GM12878 (cell line): ENCODE measurements at regions of chr1 and their contacts with region 1.

Region 1: DNA sequence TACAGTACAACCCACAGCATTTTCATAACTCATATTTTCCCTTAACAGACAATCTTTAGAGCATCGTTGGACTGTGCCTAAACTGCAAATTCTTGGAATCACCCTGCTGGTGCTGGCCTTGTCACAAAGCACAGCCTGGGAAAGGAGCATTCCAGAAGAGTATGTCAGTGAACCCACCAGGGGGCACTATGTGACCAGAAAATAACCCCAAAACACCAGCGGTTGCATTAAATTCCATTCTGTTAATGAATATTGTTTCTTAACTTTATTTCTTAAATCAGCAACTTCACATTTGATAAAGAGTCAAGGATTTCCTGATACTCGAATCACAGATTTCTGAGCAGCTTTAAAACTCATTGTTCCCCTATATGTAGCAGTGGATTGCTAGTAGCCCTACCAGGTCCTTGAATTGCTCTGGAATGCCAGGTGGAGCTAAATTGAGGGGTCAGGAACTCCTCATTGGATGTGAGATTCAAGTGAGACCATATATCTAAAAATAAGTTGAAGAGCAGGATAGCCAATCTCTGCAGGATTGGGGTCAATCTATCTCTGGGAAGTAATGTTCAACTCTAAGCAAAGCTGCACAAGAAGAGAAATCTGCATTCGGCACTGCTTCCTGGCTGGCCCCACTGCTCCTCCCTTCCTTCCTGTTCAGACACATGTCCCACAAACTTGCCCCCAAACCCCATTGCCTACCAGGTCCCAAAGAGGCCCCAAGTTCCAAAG is 12.7 kb upstream of the RAB4A start:
- DNase-seq: no peak
- ATAC-seq: peak; percentile 85
- H3K4me3 ChIP-seq: no peak overlapping the region
- H3K27ac ChIP-seq: no peak overlapping the region
- H3K4me1 ChIP-seq: 0 out of 2 replicates have a peak, but pooled peaks cover under 1% of the 10 kb centered on the region
- H3K27me3 ChIP-seq: no peaks in the 10 kb centered on the region
- CTCF ChIP-seq: peak; percentile 59 to 77 (median 76)
- EP300 ChIP-seq: no peak
- POLR2A ChIP-seq: no peak
- RAD21 ChIP-seq: peak; percentile 93

Region 2: DNA sequence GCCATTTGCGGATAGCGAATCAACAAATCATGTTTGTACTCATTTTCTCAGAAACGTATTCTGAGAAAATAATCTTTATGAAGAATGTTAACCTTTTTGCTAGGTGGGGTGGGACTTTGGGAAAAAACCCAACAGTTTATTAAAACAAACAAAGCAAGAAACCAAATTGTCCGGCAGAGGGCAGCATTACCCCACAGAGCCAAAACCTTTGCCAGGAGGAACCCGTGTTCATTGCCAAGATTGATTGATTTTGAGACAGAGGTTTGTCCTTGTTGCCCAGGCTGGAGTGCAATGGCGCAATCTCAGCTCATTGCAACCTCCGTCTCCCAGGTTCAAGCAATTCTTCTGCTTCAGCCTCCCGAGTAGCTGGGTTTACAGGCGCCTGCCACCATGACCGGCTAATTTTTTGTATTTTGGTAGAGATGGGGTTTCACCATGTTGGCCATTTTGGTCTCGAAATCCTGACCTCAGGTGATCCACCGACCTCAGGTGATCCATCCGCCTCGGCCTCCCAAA is 593.7 kb before region 1 on chr1:
- CTCF ChIA-PET with region 1: interaction called, 14 read pairs
- POLR2A ChIA-PET with region 1: no interaction called
- RAD21 ChIA-PET with region 1: interaction called, 7 read pairs
- SMC1A ChIA-PET with region 1: interaction called, 13 read pairs
- in situ Hi-C with region 1: no loop called
- intact Hi-C with region 1: no loop called
- DNase-seq: no peak
- ATAC-seq: peak; percentile 56
- H3K4me3 ChIP-seq: no peak overlapping the region
- H3K27ac ChIP-seq: no peak overlapping the region
- H3K4me1 ChIP-seq: no peaks in the 10 kb centered on the region
- H3K27me3 ChIP-seq: no peaks in the 10 kb centered on the region
- CTCF ChIP-seq: peak; percentile 59 to 79 (median 64)
- EP300 ChIP-seq: no peak
- POLR2A ChIP-seq: no peak
- RAD21 ChIP-seq: peak; percentile 94

Region 3: DNA sequence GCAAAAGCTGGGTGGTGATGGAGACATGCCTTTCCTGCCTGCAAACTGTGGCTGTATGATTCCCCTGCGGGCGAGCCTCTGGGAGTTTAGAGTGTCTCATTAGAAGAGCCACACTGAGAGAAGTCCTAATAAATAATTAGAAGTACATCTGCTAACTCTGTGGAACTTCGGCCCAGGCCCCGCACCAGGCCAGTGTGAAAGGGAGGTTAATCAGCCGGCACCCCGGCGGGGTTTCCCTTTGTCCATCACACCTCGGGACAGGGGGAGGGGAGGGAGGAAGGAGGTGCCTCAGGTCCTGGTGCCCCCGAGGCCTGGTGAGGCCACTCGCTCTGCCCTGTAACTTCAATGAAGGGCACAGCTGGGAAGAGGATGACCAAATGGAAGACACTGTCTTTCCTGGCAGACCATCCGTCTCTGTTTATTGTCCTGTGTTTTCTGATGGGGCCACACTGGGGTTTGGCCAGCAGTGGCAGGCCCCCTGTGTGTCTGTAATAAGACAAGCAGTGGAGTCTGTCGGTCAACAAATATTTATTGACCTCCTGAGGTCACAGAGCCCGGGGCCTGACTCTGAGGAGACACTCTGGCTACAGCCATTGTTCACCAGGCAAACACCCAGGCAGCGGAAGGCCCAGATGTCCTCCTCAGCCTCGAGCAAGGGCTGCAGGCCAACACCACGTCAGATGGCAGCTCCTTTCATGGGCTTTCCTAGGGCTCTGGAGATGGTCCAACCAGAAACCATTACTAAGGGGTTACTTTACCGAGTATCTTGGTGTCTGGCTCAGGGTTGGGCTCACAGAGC is 254.8 kb before region 1 on chr1:
- CTCF ChIA-PET with region 1: no interaction called
- POLR2A ChIA-PET with region 1: no interaction called
- RAD21 ChIA-PET with region 1: no interaction called
- SMC1A ChIA-PET with region 1: no interaction called
- in situ Hi-C with region 1: no loop called
- intact Hi-C with region 1: no loop called
- DNase-seq: no peak
- ATAC-seq: no peak
- H3K4me3 ChIP-seq: no peak overlapping the region
- H3K27ac ChIP-seq: no peak overlapping the region
- H3K4me1 ChIP-seq: no peaks in the 10 kb centered on the region
- H3K27me3 ChIP-seq: peaks cover 1 to 3% of the 10 kb centered on the region in 2 experiments; a peak in 2 of 4 replicates
- CTCF ChIP-seq: no peak
- EP300 ChIP-seq: no peak
- POLR2A ChIP-seq: no peak
- RAD21 ChIP-seq: no peak

Region 4: GRCh38 chr1:229396595-229397206 is 138.5 kb after region 1 on chr1:
- CTCF ChIA-PET with region 1: no interaction called
- POLR2A ChIA-PET with region 1: no interaction called
- RAD21 ChIA-PET with region 1: no interaction called
- SMC1A ChIA-PET with region 1: no interaction called
- in situ Hi-C with region 1: no loop called
- intact Hi-C with region 1: no loop called
- DNase-seq: no peak
- ATAC-seq: no peak
- H3K4me3 ChIP-seq: no peak overlapping the region
- H3K27ac ChIP-seq: no peak overlapping the region
- H3K4me1 ChIP-seq: no peaks in the 10 kb centered on the region
- H3K27me3 ChIP-seq: peaks cover 0 to 2% of the 10 kb centered on the region in 2 experiments; a peak in 1 of 4 replicates
- CTCF ChIP-seq: no peak
- EP300 ChIP-seq: no peak
- POLR2A ChIP-seq: no peak
- RAD21 ChIP-seq: no peak

Region 5: DNA sequence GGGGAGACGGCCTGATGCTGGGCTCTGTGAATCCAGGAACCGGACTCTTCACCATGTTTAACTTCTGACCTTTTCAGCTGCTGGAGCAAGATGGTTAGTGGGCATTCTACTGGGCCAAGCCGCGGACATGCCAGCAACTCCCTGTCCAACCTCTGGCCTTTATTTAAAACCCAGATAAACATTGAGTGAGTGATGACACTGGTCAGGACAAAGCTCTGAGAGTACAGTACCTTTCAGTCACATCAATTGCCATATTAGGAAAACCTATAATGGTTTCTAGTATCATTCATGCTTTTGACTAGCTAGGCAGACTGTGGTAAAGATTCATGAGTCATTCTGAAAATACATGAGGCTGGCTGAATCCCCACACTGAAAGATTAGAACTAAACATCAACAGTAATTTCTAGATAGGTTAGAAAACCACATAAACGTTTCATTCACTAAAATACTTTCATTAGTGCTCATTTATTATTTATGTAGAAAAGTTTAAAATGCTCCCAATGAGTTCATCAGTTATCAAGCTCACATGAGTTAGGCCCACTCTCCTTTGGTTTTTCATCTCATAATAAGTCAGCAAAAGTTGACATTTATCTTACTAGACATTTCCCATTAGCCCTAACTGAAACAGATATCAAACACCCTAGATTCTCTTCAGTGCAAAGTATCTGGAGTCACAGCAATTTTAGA is 182.8 kb after region 1 on chr1:
- CTCF ChIA-PET with region 1: interaction called, 6 read pairs
- POLR2A ChIA-PET with region 1: no interaction called
- RAD21 ChIA-PET with region 1: interaction called, 12 read pairs
- SMC1A ChIA-PET with region 1: interaction called, 5 read pairs
- in situ Hi-C with region 1: no loop called
- intact Hi-C with region 1: no loop called
- DNase-seq: peak; percentile 88
- ATAC-seq: peak; percentile 98
- H3K4me3 ChIP-seq: no peak overlapping the region
- H3K27ac ChIP-seq: 0 out of 2 replicates have a peak overlapping the region, but pooled peaks have one; percentile 0
- H3K4me1 ChIP-seq: peaks cover 17% of the 10 kb centered on the region
- H3K27me3 ChIP-seq: no peaks in the 10 kb centered on the region
- CTCF ChIP-seq: no peak
- EP300 ChIP-seq: peak; percentile 93 to 95
- POLR2A ChIP-seq: no peak
- RAD21 ChIP-seq: no peak

Region 6: DNA sequence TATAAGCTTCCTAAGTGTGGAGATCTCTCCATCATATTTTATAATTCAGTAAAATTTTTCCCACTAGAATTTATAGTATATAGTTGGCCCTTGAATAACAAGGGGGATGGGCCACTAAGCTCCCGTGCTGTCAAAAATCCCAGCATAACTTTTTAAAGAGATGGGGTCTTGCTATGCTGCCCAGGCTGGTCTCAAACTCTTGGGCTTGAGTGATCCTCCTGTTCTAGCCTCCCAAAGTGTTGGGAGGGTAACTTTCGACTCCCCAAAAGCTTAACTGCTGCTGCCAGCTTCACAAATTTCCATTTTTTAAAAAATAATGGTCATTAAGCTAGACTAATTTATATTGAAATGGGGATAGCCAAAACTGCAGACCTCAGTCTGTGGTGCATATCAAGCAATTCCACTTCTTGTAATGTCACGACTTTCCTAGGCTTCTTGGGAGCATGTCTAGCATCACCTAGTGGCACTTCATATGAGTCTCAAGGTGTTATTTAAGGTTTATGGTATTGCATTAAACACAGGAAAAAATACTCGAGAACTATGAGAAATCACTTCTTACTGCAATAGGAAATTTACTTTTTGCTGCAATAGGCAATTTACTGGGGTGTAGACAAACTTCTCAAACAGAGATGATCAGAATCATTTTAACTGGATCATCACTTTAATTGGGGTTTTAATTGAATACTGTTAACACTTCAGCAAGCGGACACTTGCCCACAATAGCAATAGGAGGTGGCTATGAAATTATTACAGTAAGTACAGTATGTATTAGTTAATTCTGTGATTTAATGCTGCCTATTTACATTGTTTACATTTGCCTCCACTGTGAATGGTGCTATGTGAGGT is 195.0 kb after region 1 on chr1:
- CTCF ChIA-PET with region 1: interaction called, 10 read pairs
- POLR2A ChIA-PET with region 1: no interaction called
- RAD21 ChIA-PET with region 1: no interaction called
- SMC1A ChIA-PET with region 1: interaction called, 3 read pairs
- in situ Hi-C with region 1: no loop called
- intact Hi-C with region 1: no loop called
- DNase-seq: no peak
- ATAC-seq: peak; percentile 38; the same call in 1 of the 3 replicates
- H3K4me3 ChIP-seq: no peak overlapping the region
- H3K27ac ChIP-seq: no peak overlapping the region
- H3K4me1 ChIP-seq: no peaks in the 10 kb centered on the region
- H3K27me3 ChIP-seq: no peaks in the 10 kb centered on the region
- CTCF ChIP-seq: peak; percentile 34 to 54 (median 41); a peak in 5 of 6 replicates
- EP300 ChIP-seq: no peak
- POLR2A ChIP-seq: no peak
- RAD21 ChIP-seq: peak; percentile 52

Region 7: GRCh38 chr1:229466887-229467286 is 208.7 kb after region 1 on chr1:
- CTCF ChIA-PET with region 1: interaction called, 11 read pairs
- POLR2A ChIA-PET with region 1: interaction called, 6 read pairs
- RAD21 ChIA-PET with region 1: no interaction called
- SMC1A ChIA-PET with region 1: no interaction called
- in situ Hi-C with region 1: no loop called
- intact Hi-C with region 1: no loop called
- DNase-seq: no peak
- ATAC-seq: no peak
- H3K4me3 ChIP-seq: no peak overlapping the region
- H3K27ac ChIP-seq: no peak overlapping the region
- H3K4me1 ChIP-seq: no peaks in the 10 kb centered on the region
- H3K27me3 ChIP-seq: no peaks in the 10 kb centered on the region
- CTCF ChIP-seq: no peak
- EP300 ChIP-seq: no peak
- POLR2A ChIP-seq: no peak
- RAD21 ChIP-seq: no peak

Region 8: DNA sequence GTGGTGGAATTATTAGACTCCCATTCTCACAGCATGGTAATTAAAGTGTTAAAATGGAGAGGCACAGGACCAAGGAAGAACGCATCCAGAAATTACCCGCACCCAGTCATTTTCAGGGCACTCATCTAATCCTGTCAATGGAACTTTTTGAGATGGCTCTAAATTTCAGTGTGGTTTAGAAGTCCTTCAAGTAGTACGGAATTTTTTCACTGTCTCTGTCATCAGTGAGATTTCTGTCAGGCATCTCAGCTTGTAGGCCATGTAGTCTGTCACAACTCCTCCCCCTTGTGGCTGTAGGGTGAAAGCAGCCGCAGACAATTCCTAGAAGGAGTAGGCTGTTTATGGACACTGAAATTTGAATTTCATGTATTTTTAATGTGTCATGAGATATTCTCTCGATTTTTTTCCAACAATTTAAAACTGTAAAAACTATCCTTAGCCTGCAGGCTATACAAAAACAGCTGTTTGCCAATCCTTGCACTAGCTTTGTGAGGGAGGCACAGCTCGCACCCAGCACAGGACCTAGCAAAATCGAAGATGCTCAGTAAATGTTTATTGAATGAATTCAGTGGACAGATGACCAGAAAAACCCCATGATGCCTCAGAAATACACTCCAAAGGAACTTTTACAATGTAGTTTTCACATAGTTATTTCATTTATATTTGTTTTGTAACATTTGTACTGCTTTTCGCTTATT is 256.5 kb after region 1 on chr1:
- CTCF ChIA-PET with region 1: interaction called, 24 read pairs
- POLR2A ChIA-PET with region 1: no interaction called
- RAD21 ChIA-PET with region 1: interaction called, 8 read pairs
- SMC1A ChIA-PET with region 1: interaction called, 21 read pairs
- in situ Hi-C with region 1: no loop called
- intact Hi-C with region 1: loop called (anchors 1 kb)
- DNase-seq: no peak
- ATAC-seq: peak; percentile 91
- H3K4me3 ChIP-seq: no peak overlapping the region
- H3K27ac ChIP-seq: no peak overlapping the region
- H3K4me1 ChIP-seq: no peaks in the 10 kb centered on the region; the same call in 1 of the 2 replicates
- H3K27me3 ChIP-seq: no peaks in the 10 kb centered on the region
- CTCF ChIP-seq: peak; percentile 75 to 83 (median 82)
- EP300 ChIP-seq: no peak
- POLR2A ChIP-seq: no peak
- RAD21 ChIP-seq: peak; percentile 58

Region 9: GRCh38 chr1:230310381-230311163 is 1052.4 kb after region 1 on chr1:
- CTCF ChIA-PET with region 1: interaction called, 4 read pairs
- POLR2A ChIA-PET with region 1: no interaction called
- RAD21 ChIA-PET with region 1: no interaction called
- SMC1A ChIA-PET with region 1: no interaction called
- in situ Hi-C with region 1: loop called (anchors 5 kb)
- intact Hi-C with region 1: loop called (anchors 10 kb)
- DNase-seq: peak; percentile 11
- ATAC-seq: peak; percentile 89
- H3K4me3 ChIP-seq: no peak overlapping the region
- H3K27ac ChIP-seq: no peak overlapping the region
- H3K4me1 ChIP-seq: no peaks in the 10 kb centered on the region; the same call in 1 of the 2 replicates
- H3K27me3 ChIP-seq: no peaks in the 10 kb centered on the region
- CTCF ChIP-seq: peak; percentile 89 to 94 (median 92)
- EP300 ChIP-seq: no peak
- POLR2A ChIP-seq: no peak
- RAD21 ChIP-seq: peak; percentile 99

Region 10: DNA sequence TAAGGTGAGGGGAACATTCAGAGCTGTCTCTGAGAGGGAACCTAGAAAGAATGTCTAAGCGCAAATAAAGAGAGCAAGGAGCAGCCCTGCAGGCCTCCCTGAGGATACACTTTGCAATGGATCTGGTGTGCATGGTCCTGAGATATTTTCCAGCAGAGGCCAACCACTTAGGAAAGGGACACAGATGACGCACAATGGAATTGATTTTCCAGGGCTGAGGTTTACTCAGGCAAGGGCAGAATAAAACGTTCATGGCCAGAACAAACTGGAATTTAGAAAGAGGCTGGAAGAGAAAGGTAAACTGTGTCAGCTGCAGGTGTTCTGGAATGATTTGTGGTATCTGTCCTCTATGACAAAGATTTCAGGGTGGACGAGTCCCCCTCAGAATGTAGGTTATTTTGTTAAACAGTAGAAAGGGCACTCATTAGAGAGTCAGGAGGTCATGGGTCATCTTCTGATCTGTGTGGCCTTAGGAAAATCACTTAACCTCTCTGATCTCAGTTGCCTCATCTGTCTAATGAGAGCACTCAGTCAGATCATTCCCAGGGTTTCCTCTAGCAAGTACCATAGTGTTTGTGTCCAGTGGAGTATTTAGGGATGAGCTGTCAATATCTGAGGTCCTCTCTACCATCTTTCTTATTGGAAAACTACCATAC is 1229.7 kb after region 1 on chr1:
- CTCF ChIA-PET with region 1: no interaction called
- POLR2A ChIA-PET with region 1: no interaction called
- RAD21 ChIA-PET with region 1: no interaction called
- SMC1A ChIA-PET with region 1: no interaction called
- in situ Hi-C with region 1: no loop called
- intact Hi-C with region 1: no loop called
- DNase-seq: no peak
- ATAC-seq: no peak
- H3K4me3 ChIP-seq: no peak overlapping the region
- H3K27ac ChIP-seq: no peak overlapping the region
- H3K4me1 ChIP-seq: no peaks in the 10 kb centered on the region
- H3K27me3 ChIP-seq: no peaks in the 10 kb centered on the region; a peak in 1 of 4 replicates
- CTCF ChIP-seq: no peak
- EP300 ChIP-seq: no peak
- POLR2A ChIP-seq: no peak
- RAD21 ChIP-seq: no peak